Activated CD4-positive, alpha-beta T cell treated with anti-CD3 and anti-CD28 coated beads, Interleukin-2, amount 10 ng/mL, durations not matched to agents 24 days and 14 days (primary cell): ENCODE measurements at regions of chr2 and their contacts with region 1.

Region 1: GRCh38 chr2:71157124-71157793 is 26.8 kb downstream of the MPHOSPH10 start:
- DNase-seq: peak; percentile 86
- H3K4me3 Mint-ChIP-seq: no peak overlapping the region
- H3K27ac Mint-ChIP-seq: no peak overlapping the region
- H3K4me1 Mint-ChIP-seq: peaks cover 7% of the 10 kb centered on the region
- H3K27me3 Mint-ChIP-seq: peaks cover 8% of the 10 kb centered on the region

Region 2: DNA sequence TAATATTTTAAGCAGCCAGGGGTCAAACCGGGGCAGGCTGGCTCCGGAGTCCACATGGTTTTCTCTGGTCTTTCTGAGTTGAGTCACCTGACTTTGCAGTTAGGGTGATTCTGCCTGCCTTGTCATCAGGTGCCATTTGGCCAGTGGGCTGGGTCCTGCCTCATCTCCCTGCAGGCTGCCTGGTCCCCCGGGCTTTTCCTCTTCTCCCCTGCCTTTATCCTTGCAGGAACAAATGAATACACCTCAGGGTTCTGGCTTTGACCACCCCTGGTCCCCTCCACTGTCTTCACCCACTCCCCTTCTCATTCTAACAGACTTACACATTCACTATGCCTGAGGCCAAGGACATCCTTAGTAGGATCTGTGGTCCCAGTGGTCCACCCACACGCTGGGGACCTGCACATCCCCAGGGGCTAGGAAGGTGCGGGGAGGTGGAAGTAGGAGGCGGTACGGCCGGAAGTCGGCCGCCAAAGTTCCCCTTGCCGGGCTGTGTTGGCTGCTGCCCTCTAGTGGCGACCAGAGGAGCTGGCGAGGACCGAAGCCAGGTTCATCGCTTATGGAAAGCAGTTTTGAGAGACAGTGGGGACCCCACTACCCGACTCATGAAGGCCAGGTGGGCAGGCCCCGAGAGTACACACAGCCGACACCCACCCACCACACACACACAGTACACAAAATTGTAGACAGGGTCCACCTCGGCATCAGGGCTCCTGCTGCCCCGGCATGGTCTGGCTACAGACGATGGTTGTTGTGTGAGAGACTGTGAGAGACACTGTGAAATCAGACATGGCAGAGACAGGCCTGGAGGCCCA is 156.3 kb before region 1 on chr2:
- intact Hi-C with region 1: no loop called
- DNase-seq: peak; percentile 94
- H3K4me3 Mint-ChIP-seq: peak overlapping the region; percentile 76
- H3K27ac Mint-ChIP-seq: peak overlapping the region; percentile 83
- H3K4me1 Mint-ChIP-seq: peaks cover 19% of the 10 kb centered on the region
- H3K27me3 Mint-ChIP-seq: peaks cover 2% of the 10 kb centered on the region

Region 3: GRCh38 chr2:71276311-71277146 is 119.3 kb after region 1 on chr2:
- intact Hi-C with region 1: loop called (anchors 10 kb)
- DNase-seq: peak; percentile 96
- H3K4me3 Mint-ChIP-seq: peak overlapping the region; percentile 76
- H3K27ac Mint-ChIP-seq: no peak overlapping the region
- H3K4me1 Mint-ChIP-seq: peaks cover 14% of the 10 kb centered on the region
- H3K27me3 Mint-ChIP-seq: peaks cover 75% of the 10 kb centered on the region

Region 4: GRCh38 chr2:71505086-71505769 is 348.0 kb after region 1 on chr2:
- intact Hi-C with region 1: loop called (anchors 10 kb)
- DNase-seq: no peak
- H3K4me3 Mint-ChIP-seq: no peak overlapping the region
- H3K27ac Mint-ChIP-seq: no peak overlapping the region
- H3K4me1 Mint-ChIP-seq: peaks cover 2% of the 10 kb centered on the region
- H3K27me3 Mint-ChIP-seq: peaks cover 2% of the 10 kb centered on the region

Region 5: GRCh38 chr2:71631411-71631931 is 474.2 kb after region 1 on chr2:
- intact Hi-C with region 1: no loop called
- DNase-seq: no peak
- H3K4me3 Mint-ChIP-seq: no peak overlapping the region
- H3K27ac Mint-ChIP-seq: no peak overlapping the region
- H3K4me1 Mint-ChIP-seq: no peaks in the 10 kb centered on the region
- H3K27me3 Mint-ChIP-seq: peaks cover 30% of the 10 kb centered on the region

Region 6: GRCh38 chr2:71816815-71817214 is 659.6 kb after region 1 on chr2:
- intact Hi-C with region 1: no loop called
- DNase-seq: no peak
- H3K4me3 Mint-ChIP-seq: no peak overlapping the region
- H3K27ac Mint-ChIP-seq: no peak overlapping the region
- H3K4me1 Mint-ChIP-seq: no peaks in the 10 kb centered on the region
- H3K27me3 Mint-ChIP-seq: no peaks in the 10 kb centered on the region